GM12878 (cell line): ENCODE measurements at regions of chr17 and their contacts with region 1.

Region 1: GRCh38 chr17:41672153-41672552 is 16.5 kb upstream of the EIF1 start:
- DNase-seq: no peak
- ATAC-seq: peak; percentile 24
- H3K4me3 ChIP-seq: no peak overlapping the region
- H3K27ac ChIP-seq: peak overlapping the region; percentile 21; the same call in 1 of the 2 replicates
- H3K4me1 ChIP-seq: peaks cover 34% of the 10 kb centered on the region
- H3K27me3 ChIP-seq: no peaks in the 10 kb centered on the region
- CTCF ChIP-seq: no peak
- EP300 ChIP-seq: no peak
- POLR2A ChIP-seq: no peak
- RAD21 ChIP-seq: no peak

Region 2: GRCh38 chr17:40317880-40318829 is 1354.0 kb before region 1 on chr17:
- CTCF ChIA-PET with region 1: no interaction called
- POLR2A ChIA-PET with region 1: no interaction called
- RAD21 ChIA-PET with region 1: no interaction called
- SMC1A ChIA-PET with region 1: no interaction called
- in situ Hi-C with region 1: loop called (anchors 10 kb)
- intact Hi-C with region 1: loop called (anchors 5 kb)
- DNase-seq: peak; percentile 79
- ATAC-seq: peak; percentile 83
- H3K4me3 ChIP-seq: peak overlapping the region; percentile 91
- H3K27ac ChIP-seq: peak overlapping the region; percentile 96
- H3K4me1 ChIP-seq: peaks cover 44% of the 10 kb centered on the region
- H3K27me3 ChIP-seq: no peaks in the 10 kb centered on the region
- CTCF ChIP-seq: no peak
- EP300 ChIP-seq: no peak; a peak in 1 of 4 replicates
- POLR2A ChIP-seq: peak; percentile 79
- RAD21 ChIP-seq: no peak

Region 3: GRCh38 chr17:41510251-41511065 is 161.7 kb before region 1 on chr17:
- CTCF ChIA-PET with region 1: no interaction called
- POLR2A ChIA-PET with region 1: no interaction called
- RAD21 ChIA-PET with region 1: no interaction called
- SMC1A ChIA-PET with region 1: no interaction called
- in situ Hi-C with region 1: no loop called
- intact Hi-C with region 1: no loop called
- DNase-seq: no peak
- ATAC-seq: no peak
- H3K4me3 ChIP-seq: no peak overlapping the region
- H3K27ac ChIP-seq: no peak overlapping the region
- H3K4me1 ChIP-seq: no peaks in the 10 kb centered on the region
- H3K27me3 ChIP-seq: peaks cover 2 to 4% of the 10 kb centered on the region in 2 experiments; a peak in 2 of 4 replicates
- CTCF ChIP-seq: no peak
- EP300 ChIP-seq: no peak
- POLR2A ChIP-seq: no peak
- RAD21 ChIP-seq: no peak

Region 4: GRCh38 chr17:41688699-41689496 is 16.7 kb after region 1 on chr17 and contains the start of gene EIF1:
- CTCF ChIA-PET with region 1: interaction called, 265 read pairs
- POLR2A ChIA-PET with region 1: interaction called, 177 read pairs
- RAD21 ChIA-PET with region 1: interaction called, 117 read pairs
- SMC1A ChIA-PET with region 1: interaction called, 122 read pairs
- in situ Hi-C with region 1: no loop called
- intact Hi-C with region 1: loop called (anchors 2 kb)
- DNase-seq: peak; percentile 98
- ATAC-seq: peak; percentile 85
- H3K4me3 ChIP-seq: peak within 1 kb of the TSS; percentile 87
- H3K27ac ChIP-seq: peak within 1 kb of the TSS; percentile 100
- H3K4me1 ChIP-seq: peaks cover 11% of the 10 kb centered on the region
- H3K27me3 ChIP-seq: no peaks in the 10 kb centered on the region
- CTCF ChIP-seq: no peak
- EP300 ChIP-seq: 0 out of 4 replicates have a peak, but pooled peaks of 1 of the 2 experiments have one; percentile 17
- POLR2A ChIP-seq: peak; percentile 98
- RAD21 ChIP-seq: no peak
- polyA plus RNA-seq, gene EIF1: 670 to 687 TPM